T-cell (primary cell): ENCODE measurements at regions of chr13 and their contacts with region 1.

Region 1: DNA sequence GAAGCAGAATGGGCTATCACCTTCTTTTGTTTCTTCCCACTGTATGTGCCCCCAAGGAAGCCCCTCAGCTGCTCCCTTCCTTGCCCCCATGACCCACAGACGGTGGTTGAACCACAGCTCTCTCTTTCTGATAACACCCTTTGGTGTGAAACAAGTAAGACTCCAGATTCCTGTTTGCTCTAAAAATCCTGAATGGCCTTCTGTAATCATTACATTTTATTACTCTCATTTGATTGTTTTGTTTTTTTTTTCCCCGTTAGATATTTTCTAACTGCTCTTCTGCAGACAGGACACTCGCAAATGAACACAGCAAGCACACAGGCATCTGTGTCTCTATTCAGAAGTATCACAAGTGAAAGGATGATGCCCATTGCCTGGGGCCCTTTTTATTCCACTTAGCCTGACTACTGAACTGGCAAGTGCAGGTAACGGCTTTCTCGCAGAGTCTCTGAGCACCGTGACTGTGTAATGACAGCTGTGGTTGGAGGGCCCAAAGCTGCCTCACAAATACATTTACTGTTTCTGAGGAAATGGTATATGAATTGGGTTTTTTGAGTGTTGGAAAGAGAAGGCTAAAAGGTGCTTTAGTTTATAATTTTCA is 59.3 kb downstream of the OXGR1 start:
- DNase-seq: no peak
- ATAC-seq: no peak
- H3K4me3 ChIP-seq: no peak overlapping the region
- H3K4me3 Mint-ChIP-seq: no peak overlapping the region
- H3K27ac ChIP-seq: no peak overlapping the region
- H3K27ac Mint-ChIP-seq: no peak overlapping the region
- H3K4me1 ChIP-seq: no peaks in the 10 kb centered on the region
- H3K4me1 Mint-ChIP-seq: no peaks in the 10 kb centered on the region
- H3K27me3 ChIP-seq: no peaks in the 10 kb centered on the region
- H3K27me3 Mint-ChIP-seq: no peaks in the 10 kb centered on the region

Region 2: GRCh38 chr13:96904232-96904631 is 30.8 kb before region 1 on chr13:
- CTCF ChIA-PET with region 1: interaction called in 1 of 2 experiments, 12 read pairs
- POLR2A ChIA-PET with region 1: no interaction called
- DNase-seq: no peak
- ATAC-seq: no peak
- H3K4me3 ChIP-seq: no peak overlapping the region
- H3K4me3 Mint-ChIP-seq: no peak overlapping the region
- H3K27ac ChIP-seq: no peak overlapping the region
- H3K27ac Mint-ChIP-seq: no peak overlapping the region
- H3K4me1 ChIP-seq: no peaks in the 10 kb centered on the region
- H3K4me1 Mint-ChIP-seq: no peaks in the 10 kb centered on the region
- H3K27me3 ChIP-seq: no peaks in the 10 kb centered on the region
- H3K27me3 Mint-ChIP-seq: no peaks in the 10 kb centered on the region

Region 3: DNA sequence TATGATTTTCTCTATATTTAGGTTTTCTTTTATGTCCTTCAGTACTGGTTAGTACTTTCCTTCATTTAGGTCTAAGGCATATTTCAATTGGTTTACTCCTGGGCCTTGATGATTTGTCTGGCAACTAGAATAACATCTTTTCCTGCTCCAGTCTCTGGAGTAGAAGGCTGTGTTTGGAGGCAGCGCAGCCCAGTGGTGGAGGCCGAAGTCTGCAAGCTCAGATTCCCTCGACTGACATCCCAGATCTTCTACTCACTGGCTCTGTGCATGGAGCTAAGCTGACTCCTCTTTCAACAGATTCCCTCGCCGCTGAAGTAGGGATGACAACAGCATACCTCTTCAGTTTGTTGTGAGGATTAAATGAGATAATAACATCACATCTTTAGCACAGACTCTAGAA is 639.9 kb after region 1 on chr13:
- CTCF ChIA-PET with region 1: no interaction called
- POLR2A ChIA-PET with region 1: no interaction called
- DNase-seq: peak in 1 of 35 experiments; percentile 6
- ATAC-seq: no peak
- H3K4me3 ChIP-seq: no peak overlapping the region
- H3K4me3 Mint-ChIP-seq: no peak overlapping the region
- H3K27ac ChIP-seq: no peak overlapping the region
- H3K27ac Mint-ChIP-seq: no peak overlapping the region
- H3K4me1 ChIP-seq: no peaks in the 10 kb centered on the region
- H3K4me1 Mint-ChIP-seq: no peaks in the 10 kb centered on the region
- H3K27me3 ChIP-seq: no peaks in the 10 kb centered on the region
- H3K27me3 Mint-ChIP-seq: peaks cover 1 to 15% of the 10 kb centered on the region in 2 donors